IMR-90 (cell line): ENCODE measurements at regions of chr22 and their contacts with region 1.

Region 1: DNA sequence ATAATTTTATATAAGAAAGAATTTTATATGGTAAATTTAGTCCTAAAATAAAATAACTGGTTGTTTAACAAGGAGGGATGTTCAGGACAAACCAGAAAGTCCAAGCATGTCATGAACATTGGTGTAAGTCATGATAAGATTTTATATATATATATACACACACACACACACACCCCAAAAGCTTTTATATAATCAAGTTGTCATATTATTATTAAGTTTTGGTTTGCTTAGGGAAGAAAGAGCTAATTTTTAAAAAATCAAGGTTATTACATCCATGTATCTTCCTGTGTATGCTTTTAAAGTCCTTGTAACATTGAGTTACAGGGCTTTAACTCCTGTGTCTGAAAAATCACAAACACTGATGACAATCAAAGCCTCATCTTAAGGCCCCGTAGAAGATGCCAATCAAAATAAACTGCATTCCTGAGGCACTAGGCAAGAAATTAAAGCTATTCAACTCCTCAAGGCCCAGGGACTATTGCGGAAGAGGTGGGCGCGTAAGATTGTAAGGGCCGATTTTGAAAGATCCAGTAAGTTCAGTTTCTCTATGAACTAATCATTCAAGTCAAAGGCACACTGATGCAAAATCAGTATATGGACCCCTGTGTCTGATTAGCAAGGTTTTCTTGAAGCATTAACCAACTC is 16.8 kb downstream of the APOL6 start:
- DNase-seq: no peak
- ATAC-seq: no peak
- H3K4me3 ChIP-seq: no peak overlapping the region
- H3K27ac ChIP-seq: no peak overlapping the region
- H3K4me1 ChIP-seq: peaks cover 5% of the 10 kb centered on the region
- H3K27me3 ChIP-seq: no peaks in the 10 kb centered on the region
- CTCF ChIP-seq: no peak
- POLR2A ChIP-seq: no peak
- RAD21 ChIP-seq: no peak

Region 2: GRCh38 chr22:35467681-35468434 is 197.2 kb before region 1 on chr22:
- CTCF ChIA-PET with region 1: no interaction called
- POLR2A ChIA-PET with region 1: no interaction called
- dilution Hi-C with region 1: no loop called
- in situ Hi-C with region 1: no loop called
- intact Hi-C with region 1: no loop called
- DNase-seq: peak; percentile 47
- ATAC-seq: peak; percentile 95
- H3K4me3 ChIP-seq: no peak overlapping the region
- H3K27ac ChIP-seq: peak overlapping the region; percentile 55
- H3K4me1 ChIP-seq: peaks cover 7% of the 10 kb centered on the region
- H3K27me3 ChIP-seq: no peaks in the 10 kb centered on the region
- CTCF ChIP-seq: no peak
- POLR2A ChIP-seq: no peak
- RAD21 ChIP-seq: no peak

Region 3: DNA sequence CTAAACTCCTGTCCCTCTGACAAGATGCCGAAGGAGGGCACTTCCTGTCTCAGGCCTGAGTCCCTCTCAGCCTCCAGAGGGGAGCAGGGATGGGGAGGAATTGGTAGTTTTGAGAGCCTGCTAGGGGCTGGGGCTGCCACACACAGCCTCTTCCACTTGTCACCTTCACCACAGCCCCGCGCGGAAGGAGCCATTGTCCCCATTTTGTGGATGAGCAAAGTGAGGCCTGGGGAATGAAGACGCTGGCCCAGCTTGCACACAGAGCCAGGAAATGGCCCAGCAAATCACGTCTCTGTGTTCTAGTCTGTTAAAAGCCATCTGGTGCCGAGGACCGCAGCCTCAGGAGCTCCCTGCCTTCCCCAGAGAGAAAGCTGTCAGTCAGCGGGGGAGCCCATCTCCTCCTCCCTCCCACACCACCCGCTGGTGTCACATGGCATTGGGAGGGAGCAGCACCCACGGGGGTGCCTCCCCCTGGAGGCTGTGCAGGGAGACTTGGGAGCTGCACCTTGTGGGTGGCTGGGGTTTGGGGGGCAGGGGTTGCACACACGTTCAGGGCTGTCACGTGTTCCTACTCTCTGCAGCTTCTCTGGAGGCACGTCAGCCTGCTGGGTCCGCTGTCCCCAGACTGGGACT is 89.8 kb before region 1 on chr22:
- CTCF ChIA-PET with region 1: no interaction called
- POLR2A ChIA-PET with region 1: no interaction called
- dilution Hi-C with region 1: no loop called
- in situ Hi-C with region 1: no loop called
- intact Hi-C with region 1: no loop called
- DNase-seq: no peak
- ATAC-seq: no peak
- H3K4me3 ChIP-seq: no peak overlapping the region
- H3K27ac ChIP-seq: no peak overlapping the region
- H3K4me1 ChIP-seq: no peaks in the 10 kb centered on the region
- H3K27me3 ChIP-seq: peaks cover 16% of the 10 kb centered on the region
- CTCF ChIP-seq: no peak
- POLR2A ChIP-seq: no peak
- RAD21 ChIP-seq: no peak

Region 4: GRCh38 chr22:35705141-35705540 is 40.1 kb after region 1 on chr22:
- CTCF ChIA-PET with region 1: no interaction called
- POLR2A ChIA-PET with region 1: no interaction called
- dilution Hi-C with region 1: no loop called
- in situ Hi-C with region 1: no loop called
- intact Hi-C with region 1: loop called (anchors 5 kb)
- DNase-seq: peak; percentile 95
- ATAC-seq: peak; percentile 91
- H3K4me3 ChIP-seq: no peak overlapping the region
- H3K27ac ChIP-seq: peak overlapping the region; percentile 53
- H3K4me1 ChIP-seq: peaks cover 18% of the 10 kb centered on the region
- H3K27me3 ChIP-seq: no peaks in the 10 kb centered on the region
- CTCF ChIP-seq: no peak
- POLR2A ChIP-seq: no peak
- RAD21 ChIP-seq: no peak